G401 (cell line): ENCODE measurements at regions of chr1 and their contacts with region 1.

Region 1: DNA sequence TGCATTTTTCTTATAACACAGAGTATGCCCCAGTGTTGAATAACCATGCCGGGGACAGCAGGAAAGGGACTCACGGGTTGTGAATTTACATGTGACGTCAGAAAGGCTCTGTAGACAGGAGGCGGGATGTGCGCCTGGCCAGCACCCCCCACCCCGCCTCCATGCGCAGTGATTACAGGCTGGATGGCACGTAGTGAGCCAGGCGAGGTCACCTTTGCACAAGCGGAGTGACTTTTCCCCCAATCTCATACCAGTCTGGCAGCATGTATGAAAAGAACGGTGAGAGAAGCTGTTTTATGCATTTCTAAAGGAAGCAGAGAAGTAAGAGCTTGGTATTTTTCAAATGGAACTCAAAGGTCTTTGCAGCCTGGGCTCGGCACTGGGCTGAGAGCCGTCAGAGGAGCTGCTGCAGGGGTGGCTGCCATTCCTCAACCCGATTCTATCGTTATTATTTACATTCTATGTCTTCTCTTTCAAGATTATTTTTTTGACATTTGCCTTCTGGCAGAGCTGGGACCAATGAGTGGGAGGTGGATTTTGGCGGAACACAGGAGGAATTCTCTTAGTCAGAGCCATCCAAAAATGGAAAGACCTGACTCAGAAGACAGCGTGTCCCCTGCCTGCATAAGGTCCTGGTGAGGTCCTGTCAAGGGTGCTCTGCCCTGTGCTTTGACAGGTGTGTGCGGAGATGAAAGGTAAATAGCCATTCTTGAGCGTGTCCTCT is 115.6 kb upstream of the SLC45A1 start:
- DNase-seq: peak; percentile 87

Region 2: GRCh38 chr1:8031176-8031785 is 171.1 kb before region 1 on chr1:
- in situ Hi-C with region 1: loop called (anchors 10 kb)
- DNase-seq: peak; percentile 71

Region 3: GRCh38 chr1:8283058-8283884 is 80.9 kb after region 1 on chr1:
- in situ Hi-C with region 1: no loop called
- DNase-seq: no peak